Left colon (tissue), 2 donors: ENCODE measurements at regions of chr14 and their contacts with region 1.

Region 1: GRCh38 chr14:72516936-72517700 is 376.8 kb downstream of the DPF3 start:
- DNase-seq: peak; percentile 49 to 72
- ATAC-seq: peak; percentile 82

Region 2: GRCh38 chr14:72904840-72905561 is 387.9 kb after region 1 on chr14:
- intact Hi-C with region 1: loop called (anchors 2 to 5 kb)
- DNase-seq: peak in 1 of 2 donors; percentile 48
- ATAC-seq: peak; percentile 67

Region 3: DNA sequence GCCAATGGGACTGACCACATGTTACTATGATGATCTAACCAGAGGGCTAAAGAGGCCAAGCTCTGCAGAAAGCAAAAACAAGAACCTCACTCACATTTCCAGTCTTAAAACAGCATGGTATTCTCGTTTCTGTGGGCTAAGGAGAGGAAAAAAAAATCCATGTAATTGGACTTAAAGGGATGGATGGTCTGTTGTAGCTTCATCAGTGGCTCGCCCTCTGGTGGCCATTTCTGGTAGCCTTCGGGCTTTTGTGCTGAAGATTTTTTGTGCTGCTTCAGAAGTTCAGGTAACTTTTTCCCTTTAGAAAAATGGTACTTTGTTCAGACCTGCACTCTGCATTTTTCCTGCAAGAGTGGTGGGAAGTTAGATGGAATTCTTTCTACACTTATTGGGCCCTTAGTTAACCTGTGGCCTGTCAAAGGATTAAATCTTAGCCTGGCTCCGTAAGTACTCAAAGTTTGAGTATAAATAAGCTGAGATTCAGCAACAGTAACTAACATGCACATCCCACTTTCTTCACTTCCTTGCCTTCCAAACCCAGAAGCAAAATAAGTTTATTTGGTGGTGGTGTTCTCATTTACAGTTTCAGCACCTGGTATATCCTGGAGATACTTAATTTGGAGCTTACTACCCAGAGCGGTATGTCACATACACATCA is 431.5 kb after region 1 on chr14:
- intact Hi-C with region 1: loop called in 1 of 2 experiments (anchors 2 kb)
- DNase-seq: peak in 1 of 2 donors; percentile 85
- ATAC-seq: peak; percentile 69